Sigmoid colon (tissue), 7 donors: ENCODE measurements at regions of chr6 and their contacts with region 1.

Region 1: DNA sequence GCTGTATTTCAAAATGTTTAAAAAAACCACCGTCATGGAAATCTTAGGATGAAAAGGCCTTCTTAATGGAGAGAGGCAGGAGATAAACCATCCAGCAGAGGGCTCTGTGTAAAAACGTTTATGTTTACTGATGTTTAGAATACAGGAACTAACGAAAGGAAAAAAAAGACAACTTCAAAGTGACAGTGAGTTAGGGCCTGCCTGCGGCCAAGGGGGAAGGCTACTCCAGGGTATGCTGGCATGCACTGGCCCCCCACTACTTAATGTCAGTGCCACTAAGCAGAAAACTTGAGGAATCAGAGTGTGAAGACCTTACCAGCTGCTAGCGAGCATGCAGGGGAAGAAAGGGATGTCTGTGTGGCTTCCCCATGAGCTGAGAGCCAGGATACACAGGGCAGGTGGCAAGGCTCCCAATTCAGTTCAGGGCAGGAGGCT is 47.7 kb downstream of the AKAP7 start:
- DNase-seq: no peak
- H3K4me3 ChIP-seq: no peak overlapping the region
- H3K27ac ChIP-seq: no peak overlapping the region
- H3K4me1 ChIP-seq: no peaks in the 10 kb centered on the region
- H3K27me3 ChIP-seq: no peaks in the 10 kb centered on the region
- CTCF ChIP-seq: no peak
- EP300 ChIP-seq: no peak
- POLR2A ChIP-seq: no peak

Region 2: GRCh38 chr6:130233330-130233729 is 949.7 kb before region 1 on chr6:
- intact Hi-C with region 1: no loop called
- DNase-seq: no peak
- H3K4me3 ChIP-seq: no peak overlapping the region
- H3K27ac ChIP-seq: no peak overlapping the region
- H3K4me1 ChIP-seq: peaks cover 0 to 14% (median 6%) of the 10 kb centered on the region in 4 donors
- H3K27me3 ChIP-seq: no peaks in the 10 kb centered on the region
- CTCF ChIP-seq: no peak
- EP300 ChIP-seq: no peak
- POLR2A ChIP-seq: no peak

Region 3: GRCh38 chr6:131532580-131533039 is 349.6 kb after region 1 on chr6:
- intact Hi-C with region 1: loop called (anchors 10 kb)
- DNase-seq: no peak
- H3K4me3 ChIP-seq: no peak overlapping the region
- H3K27ac ChIP-seq: no peak overlapping the region
- H3K4me1 ChIP-seq: no peaks in the 10 kb centered on the region
- H3K27me3 ChIP-seq: no peaks in the 10 kb centered on the region
- CTCF ChIP-seq: no peak
- EP300 ChIP-seq: no peak
- POLR2A ChIP-seq: no peak

Region 4: DNA sequence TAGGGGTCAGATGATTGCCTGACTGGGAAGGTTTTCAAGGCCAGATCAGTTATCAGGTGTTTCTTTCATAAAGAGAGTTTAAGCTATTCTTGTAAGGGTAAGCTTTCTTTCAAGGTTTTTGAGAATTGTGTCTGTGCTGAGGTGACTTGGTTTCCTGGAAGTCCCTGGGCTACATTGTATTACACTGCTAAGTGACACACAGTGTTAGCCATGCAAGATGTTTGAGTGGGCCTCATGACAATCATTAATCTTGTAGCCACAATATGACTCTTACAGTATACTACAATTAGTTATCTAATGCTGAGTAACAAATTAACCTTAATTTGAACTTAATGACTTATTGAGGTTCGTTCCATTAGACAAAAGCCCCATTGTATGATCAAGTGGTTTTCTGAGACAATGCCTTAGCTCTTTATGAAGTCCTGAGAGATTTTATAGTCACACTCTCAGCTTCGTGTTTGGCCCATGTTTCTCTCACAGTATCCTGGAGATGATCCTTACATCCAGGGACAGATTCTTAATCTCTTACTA is 1818.1 kb after region 1 on chr6:
- intact Hi-C with region 1: no loop called
- DNase-seq: no peak
- H3K4me3 ChIP-seq: no peak overlapping the region
- H3K27ac ChIP-seq: no peak overlapping the region
- H3K4me1 ChIP-seq: no peaks in the 10 kb centered on the region
- H3K27me3 ChIP-seq: no peaks in the 10 kb centered on the region
- CTCF ChIP-seq: no peak
- EP300 ChIP-seq: no peak
- POLR2A ChIP-seq: no peak